RWPE1 (cell line): ENCODE measurements at regions of chr12 and their contacts with region 1.

Region 1: DNA sequence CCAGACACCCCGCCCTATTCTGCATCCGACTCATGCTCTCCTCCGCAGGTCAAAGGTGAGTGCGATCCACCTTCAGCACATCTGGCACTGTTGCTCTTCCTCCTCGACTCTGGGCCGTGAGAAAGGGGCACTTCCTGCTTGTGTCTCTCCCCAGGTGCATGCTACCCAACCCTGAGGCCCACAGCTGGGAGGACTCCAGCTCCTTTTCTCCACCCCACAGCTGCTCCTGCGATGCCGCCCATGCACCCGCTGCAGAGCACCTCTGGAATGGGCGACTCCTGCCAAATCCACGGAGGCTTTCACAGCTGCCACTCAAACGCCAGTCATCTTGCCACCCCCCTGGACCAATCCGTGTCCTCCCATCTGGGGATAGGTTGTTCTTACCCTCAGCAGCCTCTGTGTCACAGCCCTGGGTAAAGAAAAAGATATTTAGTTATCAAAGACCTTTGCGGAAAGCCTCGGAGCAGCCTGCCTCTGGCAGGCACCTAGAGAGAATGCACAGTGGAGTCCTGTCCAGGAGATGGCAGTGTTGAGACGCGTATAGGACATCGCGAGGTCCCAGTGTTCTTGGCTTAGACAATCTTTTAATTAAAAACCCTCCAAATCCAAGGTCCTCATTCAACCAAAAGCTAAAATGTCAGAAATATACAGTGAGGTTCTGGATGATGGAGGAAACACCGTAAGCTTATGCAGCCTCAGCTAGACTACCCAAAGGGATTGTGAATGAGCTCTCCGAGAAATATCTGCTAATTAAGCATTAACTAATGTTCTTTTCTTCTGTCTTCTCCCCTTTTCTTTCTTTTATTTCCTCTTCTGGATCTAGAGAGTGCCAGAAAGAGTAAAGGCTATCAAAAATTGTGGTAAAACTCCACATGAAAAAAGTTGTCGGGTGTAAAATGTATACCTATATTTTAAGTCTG is 54.3 kb downstream of the MYRFL start:
- DNase-seq: peak; percentile 82
- H3K27ac ChIP-seq: peak overlapping the region; percentile 54
- CTCF ChIP-seq: peak; percentile 86

Region 2: GRCh38 chr12:70576346-70577282 is 697.3 kb after region 1 on chr12:
- CTCF ChIA-PET with region 1: interaction called, 23 read pairs
- POLR2A ChIA-PET with region 1: no interaction called
- DNase-seq: peak; percentile 61
- H3K27ac ChIP-seq: no peak overlapping the region
- CTCF ChIP-seq: peak; percentile 74